ENCODE measurements at regions of chr15 and their contacts with region 1.

Region 1: DNA sequence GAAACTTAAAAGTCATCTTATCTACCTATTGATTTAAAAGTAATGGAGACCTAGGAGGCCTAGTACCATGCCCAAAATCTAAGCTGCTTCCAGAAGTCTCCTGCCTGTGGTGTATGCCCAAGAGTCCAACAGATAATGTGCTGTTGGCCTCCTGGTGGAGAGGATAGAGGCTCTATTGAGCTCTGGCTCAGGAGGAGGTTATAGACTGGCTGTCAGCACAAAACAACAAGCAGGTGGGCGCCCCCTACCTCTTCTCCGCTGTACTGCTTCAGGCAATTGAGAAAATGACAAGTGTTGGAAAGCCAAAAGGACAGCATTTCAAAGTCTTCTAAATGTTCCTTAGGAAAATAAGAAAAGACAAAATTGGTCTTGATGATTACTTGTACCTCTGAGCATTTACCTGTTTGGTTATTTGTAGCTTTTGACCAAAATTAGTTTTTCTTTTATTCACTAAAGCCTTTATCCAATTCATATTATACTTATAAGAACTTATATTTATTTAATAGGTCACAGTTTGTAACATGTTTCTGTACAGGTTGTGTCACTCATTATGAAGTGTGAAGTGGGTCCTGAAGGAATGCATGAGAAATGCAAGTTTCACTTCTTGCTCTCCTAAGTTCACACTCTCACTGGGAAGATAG is 17.2 kb upstream of the GNB5 start:
- H3K4me3 ChIP-seq: no peak overlapping the region
- H3K27ac ChIP-seq: no peak overlapping the region
- H3K4me1 ChIP-seq: no peaks in the 10 kb centered on the region
- CTCF ChIP-seq: peak; percentile 57; the same call in 1 of the 2 replicates

Region 2: GRCh38 chr15:52093539-52094502 is 114.6 kb before region 1 on chr15:
- CTCF ChIA-PET with region 1: no interaction called
- POLR2A ChIA-PET with region 1: no interaction called
- H3K4me3 ChIP-seq: no peak overlapping the region
- H3K27ac ChIP-seq: no peak overlapping the region
- H3K4me1 ChIP-seq: no peaks in the 10 kb centered on the region; the same call in 1 of the 2 replicates
- CTCF ChIP-seq: no peak

Region 3: DNA sequence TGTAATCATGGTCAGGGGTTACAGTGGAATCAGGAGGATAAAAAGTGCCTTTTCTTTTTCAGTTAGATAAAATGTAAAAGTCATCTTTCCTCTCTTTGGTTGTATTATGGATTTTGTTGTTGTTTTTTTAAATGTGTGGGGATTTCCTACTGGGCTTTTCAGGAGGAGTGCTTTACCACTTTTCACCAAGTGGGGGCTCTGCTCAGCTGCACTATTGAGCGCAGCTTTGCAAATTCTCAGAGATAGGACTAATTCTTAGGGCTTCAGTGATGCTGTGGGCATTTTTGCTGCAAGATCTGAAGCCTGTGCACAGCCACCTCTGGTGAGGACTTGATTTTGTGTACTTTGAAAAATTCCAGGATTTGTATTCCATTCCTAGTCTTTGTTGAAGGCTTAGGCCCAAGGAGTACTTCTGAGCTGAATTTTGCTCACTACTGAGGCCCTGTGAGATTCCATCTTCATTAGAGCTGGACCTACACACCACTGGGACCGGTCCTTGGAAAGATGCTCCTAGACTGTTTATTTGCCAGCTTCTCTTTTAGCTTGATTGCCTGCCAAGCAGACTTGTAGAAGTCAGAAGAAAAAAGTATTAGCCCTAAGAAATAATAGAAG is 24.8 kb before region 1 on chr15:
- CTCF ChIA-PET with region 1: interaction called, 13 read pairs
- POLR2A ChIA-PET with region 1: no interaction called
- H3K4me3 ChIP-seq: no peak overlapping the region
- H3K27ac ChIP-seq: no peak overlapping the region
- H3K4me1 ChIP-seq: no peaks in the 10 kb centered on the region
- CTCF ChIP-seq: no peak

Region 4: DNA sequence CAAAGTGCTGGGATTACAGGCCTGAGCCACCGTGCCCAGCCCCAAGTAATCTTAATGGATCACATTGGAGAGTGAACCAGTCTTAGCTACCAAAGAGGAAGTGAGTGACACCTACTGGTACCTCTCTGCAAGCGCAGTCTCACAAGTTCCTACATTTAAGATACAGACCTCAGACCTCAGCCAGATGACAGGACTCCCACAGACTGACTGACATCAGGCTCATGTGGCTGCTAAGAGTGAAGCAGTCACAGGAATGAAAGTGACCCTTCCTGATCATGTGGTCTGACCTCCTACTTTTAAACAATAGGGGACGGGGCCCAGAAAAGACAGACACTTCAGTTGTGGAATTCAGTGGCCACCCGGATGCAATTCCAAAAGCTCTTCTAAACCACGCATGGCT is 19.0 kb after region 1 on chr15:
- CTCF ChIA-PET with region 1: interaction called, 13 read pairs
- POLR2A ChIA-PET with region 1: interaction called, 3 read pairs
- H3K4me3 ChIP-seq: no peak overlapping the region
- H3K27ac ChIP-seq: no peak overlapping the region
- H3K4me1 ChIP-seq: no peaks in the 10 kb centered on the region
- CTCF ChIP-seq: no peak

Region 5: GRCh38 chr15:52288051-52288942 is 79.9 kb after region 1 on chr15:
- CTCF ChIA-PET with region 1: no interaction called
- POLR2A ChIA-PET with region 1: no interaction called
- H3K4me3 ChIP-seq: no peak overlapping the region
- H3K27ac ChIP-seq: no peak overlapping the region
- H3K4me1 ChIP-seq: peaks cover 2% of the 10 kb centered on the region; the same call in 1 of the 2 replicates
- CTCF ChIP-seq: no peak